Esophagus squamous epithelium (tissue), 5 donors: ENCODE measurements at regions of chr18 and their contacts with region 1.

Region 1: GRCh38 chr18:24118750-24119577 is 19.9 kb upstream of the CABYR start:
- DNase-seq: no peak
- H3K4me3 ChIP-seq: no peak overlapping the region
- H3K27ac ChIP-seq: no peak overlapping the region
- H3K4me1 ChIP-seq: no peaks in the 10 kb centered on the region
- H3K27me3 ChIP-seq: no peaks in the 10 kb centered on the region
- CTCF ChIP-seq: peak; percentile 88 to 96 (median 91)
- POLR2A ChIP-seq: no peak

Region 2: GRCh38 chr18:23943104-23943503 is 175.9 kb before region 1 on chr18:
- intact Hi-C with region 1: loop called (anchors 10 kb)
- DNase-seq: no peak
- H3K4me3 ChIP-seq: no peak overlapping the region
- H3K27ac ChIP-seq: no peak overlapping the region
- H3K4me1 ChIP-seq: no peaks in the 10 kb centered on the region
- H3K27me3 ChIP-seq: no peaks in the 10 kb centered on the region
- CTCF ChIP-seq: no peak
- POLR2A ChIP-seq: no peak

Region 3: GRCh38 chr18:24014062-24014985 is 104.6 kb before region 1 on chr18 and contains the start of gene TTC39C:
- intact Hi-C with region 1: loop called (anchors 10 kb)
- DNase-seq: peak; percentile 49
- H3K4me3 ChIP-seq: peak within 1 kb of the TSS; percentile 82 to 94 (median 88)
- H3K27ac ChIP-seq: peak within 1 kb of the TSS; percentile 87 to 94 (median 90)
- H3K4me1 ChIP-seq: peaks cover 5 to 59% (median 8%) of the 10 kb centered on the region in 3 donors
- H3K27me3 ChIP-seq: no peaks in the 10 kb centered on the region
- CTCF ChIP-seq: peak in 1 of 6 experiments; percentile 6
- POLR2A ChIP-seq: peak in 2 of 4 donors; percentile 56 to 63
- total RNA-seq, gene TTC39C: 12.3 to 35.9 (median 24.8) TPM

Region 4: GRCh38 chr18:24160086-24160485 is 41.1 kb after region 1 on chr18:
- intact Hi-C with region 1: no loop called
- DNase-seq: no peak
- H3K4me3 ChIP-seq: no peak overlapping the region
- H3K27ac ChIP-seq: no peak overlapping the region
- H3K4me1 ChIP-seq: no peaks in the 10 kb centered on the region
- H3K27me3 ChIP-seq: no peaks in the 10 kb centered on the region
- CTCF ChIP-seq: no peak
- POLR2A ChIP-seq: no peak

Region 5: DNA sequence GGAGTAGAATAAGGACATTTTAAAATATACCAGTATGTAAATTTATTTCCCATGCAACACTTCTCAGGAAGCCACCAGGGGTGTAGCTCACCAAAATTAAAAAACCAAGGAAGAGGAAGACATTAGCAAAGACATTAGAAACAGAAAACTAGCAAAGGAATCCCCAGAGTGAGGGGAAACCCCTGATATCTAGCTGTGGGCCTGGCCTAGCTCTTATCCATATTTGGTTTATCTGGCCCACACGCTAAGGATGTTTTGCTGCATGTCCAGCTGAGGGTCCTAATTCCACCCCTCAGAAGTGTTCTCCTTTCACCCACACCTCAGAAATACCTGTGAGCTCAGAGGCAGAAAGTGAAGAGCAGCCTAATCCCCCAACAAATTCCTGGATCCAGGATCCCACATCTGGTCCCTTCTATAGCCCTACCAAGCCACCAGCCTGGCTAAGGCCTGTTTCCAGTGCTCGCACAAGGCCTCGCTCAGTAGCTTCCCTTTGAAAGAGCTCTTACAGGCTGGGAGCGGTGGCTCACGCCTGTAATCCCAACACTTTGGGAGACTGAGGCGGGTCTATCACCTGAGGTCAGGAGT is 261.3 kb after region 1 on chr18:
- intact Hi-C with region 1: no loop called
- DNase-seq: no peak
- H3K4me3 ChIP-seq: no peak overlapping the region
- H3K27ac ChIP-seq: no peak overlapping the region
- H3K4me1 ChIP-seq: no peaks in the 10 kb centered on the region
- H3K27me3 ChIP-seq: no peaks in the 10 kb centered on the region
- CTCF ChIP-seq: no peak
- POLR2A ChIP-seq: no peak